ENCODE measurements at regions of chr4 and their contacts with region 1.

Region 1: DNA sequence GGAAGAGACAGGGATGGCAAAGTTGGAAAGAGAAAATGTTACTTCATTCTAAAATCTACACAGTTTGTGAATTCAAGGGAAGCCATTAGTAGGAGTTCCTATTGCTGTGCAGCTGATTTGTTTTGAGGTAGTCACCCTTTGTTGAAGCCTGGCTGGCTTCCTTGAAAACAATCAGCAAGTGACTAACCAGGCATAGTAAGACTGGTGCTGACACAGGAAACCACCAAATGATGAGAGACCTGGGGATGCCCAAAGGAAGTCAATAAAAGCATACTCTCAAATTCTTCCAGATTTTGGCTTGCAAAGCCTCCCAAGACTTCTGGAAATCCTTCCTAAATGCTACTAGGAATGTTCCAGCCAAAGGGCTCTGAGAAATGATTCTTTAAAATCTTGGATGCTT is 23.9 kb upstream of the PRDM8 start:
- DNase-seq: no peak
- ATAC-seq: no peak

Region 2: DNA sequence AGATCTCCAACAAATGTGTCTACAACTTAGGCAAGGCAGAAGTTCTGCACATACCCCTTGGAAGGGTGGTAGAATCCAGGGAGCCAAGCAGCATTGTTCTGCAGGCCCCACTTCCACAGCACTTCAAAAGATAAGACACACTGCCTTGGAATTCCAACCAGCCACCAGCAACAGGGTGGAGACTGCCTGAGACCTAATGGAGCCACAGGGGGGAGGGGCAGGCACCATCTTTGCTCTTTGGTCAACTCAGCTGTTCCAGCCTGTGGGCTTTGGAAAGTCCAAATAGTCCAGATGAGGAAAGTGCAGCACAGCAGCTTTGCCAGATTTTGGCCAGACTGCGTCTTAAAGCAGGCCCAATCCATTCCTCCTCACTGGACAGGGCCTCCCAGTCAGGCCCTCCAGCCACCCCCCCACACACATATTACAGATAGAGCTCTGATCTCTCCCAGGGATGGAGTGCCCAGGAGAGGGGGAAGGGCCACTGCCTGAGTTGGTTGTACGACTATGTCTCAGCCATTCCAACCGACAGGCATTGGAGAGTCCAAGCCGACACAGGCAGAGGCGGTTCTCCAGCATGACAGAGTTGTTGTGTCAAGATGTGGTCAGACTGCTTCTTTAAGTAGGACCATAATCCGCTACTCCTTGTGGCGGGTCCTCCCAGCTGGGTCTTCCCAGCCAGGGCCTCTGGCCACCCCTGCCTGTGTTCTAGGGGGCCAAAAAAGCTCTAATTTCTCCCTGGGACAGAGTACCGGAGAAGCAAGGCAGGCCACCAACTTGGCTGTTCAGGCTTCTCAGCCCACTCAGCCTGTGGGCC is 57.8 kb before region 1 on chr4:
- intact Hi-C with region 1: loop called (anchors 2 kb)
- DNase-seq: no peak
- ATAC-seq: no peak